ENCODE measurements at regions of chr12 and their contacts with region 1.

Region 1: DNA sequence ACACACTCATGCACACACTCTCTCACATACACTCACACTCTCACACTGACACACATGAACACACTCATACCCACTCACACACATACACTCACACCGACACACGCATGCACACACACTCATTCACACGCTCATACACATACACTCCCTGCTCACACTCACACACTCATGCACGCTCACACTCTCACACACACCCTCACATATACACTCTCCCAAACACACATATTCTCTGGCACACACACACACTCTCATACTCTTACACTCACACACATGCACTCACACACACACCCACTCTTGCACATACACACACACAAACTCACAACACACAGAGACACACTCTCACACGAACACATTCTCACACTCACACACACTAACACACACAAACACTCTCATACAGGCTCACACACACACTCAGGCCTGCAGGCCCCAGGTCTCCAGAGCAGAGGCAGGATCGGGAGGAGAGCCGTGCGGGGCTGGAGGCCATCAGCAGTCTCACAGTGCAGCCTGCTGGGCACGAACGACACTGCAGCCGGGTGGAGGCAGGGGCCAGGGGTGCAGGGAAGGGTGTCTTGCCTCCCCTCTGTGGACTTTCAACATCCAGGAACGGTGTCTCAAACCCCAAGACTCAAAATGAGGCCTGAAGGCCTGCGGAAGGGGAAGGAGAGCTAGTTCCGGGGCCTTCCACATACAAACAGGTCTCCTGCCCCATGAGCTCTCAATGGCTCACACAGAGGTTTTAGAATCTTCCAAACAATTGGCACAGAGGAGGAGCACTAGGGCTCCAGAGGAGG is 148.7 kb downstream of the ANO2 start:
- DNase-seq: no peak
- H3K4me3 ChIP-seq: no peak overlapping the region
- H3K27ac ChIP-seq: no peak overlapping the region
- H3K4me1 ChIP-seq: no peaks in the 10 kb centered on the region
- H3K27me3 ChIP-seq: no peaks in the 10 kb centered on the region
- CTCF ChIP-seq: peak in 3 of 4 experiments; percentile 40 to 58 (median 41)
- EP300 ChIP-seq: no peak
- POLR2A ChIP-seq: no peak

Region 2: GRCh38 chr12:5432011-5432400 is 364.4 kb before region 1 on chr12 and contains the start of gene NTF3:
- intact Hi-C with region 1: loop called (anchors 10 kb)
- DNase-seq: no peak
- H3K4me3 ChIP-seq: peak within 1 kb of the TSS; percentile 34 to 47 (median 44)
- H3K27ac ChIP-seq: peak within 1 kb of the TSS in 3 of 4 donors; percentile 23 to 46 (median 42)
- H3K4me1 ChIP-seq: peaks cover 0 to 38% (median 35%) of the 10 kb centered on the region in 4 donors
- H3K27me3 ChIP-seq: peaks cover 25 to 85% (median 55%) of the 10 kb centered on the region in 3 donors
- CTCF ChIP-seq: no peak
- EP300 ChIP-seq: no peak
- POLR2A ChIP-seq: no peak
- total RNA-seq, gene NTF3: 0.71 to 1.8 (median 0.89) TPM

Measured in sigmoid colon (tissue), 7 donors.